Mucosa of descending colon (tissue), 3 donors: ENCODE measurements at regions of chr10 and their contacts with region 1.

Region 1: GRCh38 chr10:77494327-77494726 is 143.3 kb downstream of the KCNMA1 start:
- DNase-seq: peak in 1 of 3 donors; percentile 27
- ATAC-seq: no peak
- H3K4me3 ChIP-seq: no peak overlapping the region
- H3K4me1 ChIP-seq: no peaks in the 10 kb centered on the region
- CTCF ChIP-seq: no peak

Region 2: GRCh38 chr10:77319557-77319956 is 174.8 kb before region 1 on chr10:
- intact Hi-C with region 1: no loop called
- DNase-seq: no peak
- ATAC-seq: no peak
- H3K4me3 ChIP-seq: no peak overlapping the region
- H3K4me1 ChIP-seq: no peaks in the 10 kb centered on the region
- CTCF ChIP-seq: no peak

Region 3: GRCh38 chr10:77622889-77623291 is 128.6 kb after region 1 on chr10:
- intact Hi-C with region 1: loop called in 1 of 2 experiments (anchors 10 kb)
- DNase-seq: no peak
- ATAC-seq: peak; percentile 46
- H3K4me3 ChIP-seq: no peak overlapping the region
- H3K4me1 ChIP-seq: no peaks in the 10 kb centered on the region
- CTCF ChIP-seq: no peak

Region 4: DNA sequence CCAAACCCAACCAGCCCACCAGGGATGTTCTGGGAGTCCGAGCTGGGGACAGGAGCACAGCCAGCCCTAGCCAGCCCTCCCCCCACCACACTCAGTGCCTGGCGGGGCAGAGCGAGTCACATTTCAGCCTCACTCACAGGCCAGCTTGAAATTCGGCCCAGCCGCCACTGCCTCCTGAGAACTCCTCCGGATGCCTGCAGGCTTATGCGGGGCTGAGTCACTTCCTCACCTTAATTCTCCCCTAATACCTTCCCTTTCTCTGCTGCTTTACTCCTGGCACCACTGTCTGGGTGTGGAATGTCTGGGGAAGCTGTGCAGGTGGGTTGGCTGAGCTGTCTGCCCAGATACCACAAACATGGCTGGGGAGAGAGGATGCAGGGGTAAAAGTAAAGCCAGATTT is 454.8 kb after region 1 on chr10:
- intact Hi-C with region 1: no loop called
- DNase-seq: no peak
- ATAC-seq: no peak
- H3K4me3 ChIP-seq: no peak overlapping the region
- H3K4me1 ChIP-seq: no peaks in the 10 kb centered on the region
- CTCF ChIP-seq: no peak